ENCODE measurements at regions of chr11 and their contacts with region 1.

Region 1: DNA sequence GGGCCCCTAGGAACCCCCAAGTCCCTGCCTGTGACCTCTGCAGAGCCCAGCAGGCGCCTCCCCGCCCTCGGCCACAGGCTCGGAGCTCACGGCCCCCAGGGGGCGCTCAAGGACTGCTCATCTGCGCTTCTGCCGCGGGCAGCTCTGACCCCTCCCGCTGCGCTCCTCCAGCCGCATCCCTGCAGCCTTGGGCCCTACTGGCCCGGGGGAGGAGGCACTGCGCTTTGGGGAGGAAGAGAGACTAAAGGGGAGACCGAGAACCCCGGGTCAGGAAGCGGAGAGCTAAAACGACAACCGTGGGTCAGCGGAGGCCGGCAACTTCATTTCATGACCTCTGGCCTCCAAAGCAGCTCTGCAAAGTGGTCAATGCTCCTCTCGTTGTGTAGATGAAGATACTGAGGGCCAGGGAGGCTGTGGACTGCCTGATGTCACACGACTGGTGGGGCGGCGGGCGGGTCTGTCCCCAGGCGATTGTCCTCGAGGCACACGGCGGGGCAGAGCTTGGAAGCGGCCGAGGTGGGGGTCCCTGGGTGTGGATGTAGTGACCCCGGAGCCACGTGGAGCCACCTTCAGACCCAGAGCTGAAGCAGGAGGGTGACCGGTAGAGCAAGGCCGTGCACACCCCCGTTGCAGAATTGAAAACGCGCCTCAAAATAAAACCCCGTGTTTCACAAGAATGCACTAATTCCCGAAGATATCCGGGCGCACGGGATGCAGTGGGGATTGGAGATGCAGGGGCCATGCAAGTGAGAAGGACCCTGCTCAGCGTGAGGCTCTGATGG is 2.7 kb upstream of the KRTAP5-6 start:
- DNase-seq: peak; percentile 50 to 67
- ATAC-seq: peak; percentile 87 to 92
- H3K4me3 ChIP-seq: peak overlapping the region in 3 of 4 donors; percentile 26 to 45 (median 27)
- H3K27ac ChIP-seq: peak overlapping the region in 1 of 4 donors; percentile 43
- H3K4me1 ChIP-seq: peaks cover 5 to 7% of the 10 kb centered on the region in 2 donors
- H3K27me3 ChIP-seq: no peaks in the 10 kb centered on the region
- CTCF ChIP-seq: peak; percentile 84 to 97 (median 95)
- POLR2A ChIP-seq: no peak

Region 2: DNA sequence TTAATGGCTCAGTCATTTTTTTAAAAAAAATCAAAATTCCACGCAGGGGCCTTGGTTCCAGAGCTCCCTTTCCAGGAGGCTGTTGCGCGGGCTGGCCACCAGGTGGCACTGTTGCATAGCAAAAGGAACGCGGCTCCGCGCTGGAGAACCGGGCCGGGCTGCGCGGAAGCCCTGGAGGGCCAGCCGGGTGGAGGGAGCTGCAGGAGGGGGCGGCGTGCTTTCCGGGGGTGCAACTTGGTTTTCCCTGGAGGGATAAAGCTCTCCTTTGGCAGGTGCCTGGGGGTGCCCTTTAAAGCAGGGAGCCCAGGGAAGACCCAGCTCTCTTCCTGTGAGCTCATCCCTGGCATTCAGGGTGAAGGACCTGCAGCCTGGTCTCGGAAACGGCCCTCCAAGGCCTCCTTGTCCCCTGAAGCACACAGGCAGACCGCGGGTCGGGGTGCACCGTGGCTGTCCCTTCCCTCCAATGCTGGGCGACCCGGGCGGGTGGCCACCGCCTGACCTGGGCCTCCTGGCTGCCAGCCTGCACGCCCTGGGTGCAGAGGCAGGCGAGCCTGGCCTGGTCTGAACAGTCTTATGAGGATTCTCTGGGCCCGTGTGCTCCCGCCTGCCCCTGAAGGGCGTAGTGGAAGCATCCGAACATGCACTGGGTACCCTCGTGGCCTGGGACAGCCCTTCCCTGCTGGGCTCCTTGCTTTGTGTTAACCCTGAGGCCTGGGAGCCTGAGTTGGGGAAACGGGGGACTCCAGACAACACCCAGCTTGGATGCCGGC is 41.3 kb before region 1 on chr11:
- in situ Hi-C with region 1: no loop called
- intact Hi-C with region 1: loop called (anchors 5 kb)
- DNase-seq: peak; percentile 29 to 52
- ATAC-seq: peak; percentile 66 to 80
- H3K4me3 ChIP-seq: no peak overlapping the region
- H3K27ac ChIP-seq: no peak overlapping the region
- H3K4me1 ChIP-seq: no peaks in the 10 kb centered on the region
- H3K27me3 ChIP-seq: no peaks in the 10 kb centered on the region
- CTCF ChIP-seq: peak; percentile 84 to 99 (median 96)
- POLR2A ChIP-seq: no peak

Region 3: GRCh38 chr11:1820463-1821325 is 126.4 kb after region 1 on chr11:
- in situ Hi-C with region 1: loop called (anchors 5 to 10 kb)
- intact Hi-C with region 1: no loop called
- DNase-seq: no peak
- ATAC-seq: no peak
- H3K4me3 ChIP-seq: no peak overlapping the region
- H3K27ac ChIP-seq: no peak overlapping the region
- H3K4me1 ChIP-seq: no peaks in the 10 kb centered on the region
- H3K27me3 ChIP-seq: no peaks in the 10 kb centered on the region
- CTCF ChIP-seq: no peak
- POLR2A ChIP-seq: no peak

Region 4: DNA sequence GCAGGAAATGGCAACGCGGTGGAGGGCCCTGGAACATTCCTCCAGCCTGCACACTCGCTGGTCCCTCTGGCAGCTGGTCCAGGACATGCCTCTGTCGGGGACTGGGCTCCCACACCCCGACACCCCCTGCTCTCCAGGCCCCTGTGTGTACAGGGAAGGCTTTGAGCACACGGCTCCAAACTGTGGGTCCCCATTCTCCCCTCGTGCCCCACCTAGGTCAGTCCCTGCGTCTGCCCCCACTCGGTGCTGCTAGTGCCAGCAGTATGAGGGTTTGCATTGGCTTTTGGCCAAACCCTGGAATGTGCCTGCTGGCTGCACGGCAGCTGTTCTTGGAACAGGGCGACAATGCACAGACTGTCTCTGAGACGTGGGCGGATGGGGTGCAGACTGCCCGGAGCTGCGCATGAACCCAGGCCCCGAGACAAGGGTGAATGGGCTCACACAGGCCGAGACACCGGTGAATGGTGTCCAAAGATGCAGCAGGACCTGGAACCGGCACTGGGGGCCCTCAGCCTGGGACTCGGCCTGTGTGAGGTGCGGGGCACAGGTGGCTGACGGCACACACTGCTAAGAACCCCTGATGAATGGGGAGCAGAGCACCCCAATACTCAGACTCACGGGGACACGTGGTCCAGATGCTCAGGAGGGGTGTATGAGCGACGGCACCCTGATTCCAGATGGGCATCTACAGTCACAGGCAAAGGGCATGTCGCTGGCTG is 133.0 kb after region 1 on chr11:
- in situ Hi-C with region 1: loop called (anchors 5 to 10 kb)
- intact Hi-C with region 1: loop called (anchors 1 kb)
- DNase-seq: peak in 1 of 2 donors; percentile 15
- ATAC-seq: peak in 1 of 2 donors; percentile 23
- H3K4me3 ChIP-seq: no peak overlapping the region
- H3K27ac ChIP-seq: no peak overlapping the region
- H3K4me1 ChIP-seq: no peaks in the 10 kb centered on the region
- H3K27me3 ChIP-seq: no peaks in the 10 kb centered on the region
- CTCF ChIP-seq: no peak
- POLR2A ChIP-seq: no peak

Region 5: DNA sequence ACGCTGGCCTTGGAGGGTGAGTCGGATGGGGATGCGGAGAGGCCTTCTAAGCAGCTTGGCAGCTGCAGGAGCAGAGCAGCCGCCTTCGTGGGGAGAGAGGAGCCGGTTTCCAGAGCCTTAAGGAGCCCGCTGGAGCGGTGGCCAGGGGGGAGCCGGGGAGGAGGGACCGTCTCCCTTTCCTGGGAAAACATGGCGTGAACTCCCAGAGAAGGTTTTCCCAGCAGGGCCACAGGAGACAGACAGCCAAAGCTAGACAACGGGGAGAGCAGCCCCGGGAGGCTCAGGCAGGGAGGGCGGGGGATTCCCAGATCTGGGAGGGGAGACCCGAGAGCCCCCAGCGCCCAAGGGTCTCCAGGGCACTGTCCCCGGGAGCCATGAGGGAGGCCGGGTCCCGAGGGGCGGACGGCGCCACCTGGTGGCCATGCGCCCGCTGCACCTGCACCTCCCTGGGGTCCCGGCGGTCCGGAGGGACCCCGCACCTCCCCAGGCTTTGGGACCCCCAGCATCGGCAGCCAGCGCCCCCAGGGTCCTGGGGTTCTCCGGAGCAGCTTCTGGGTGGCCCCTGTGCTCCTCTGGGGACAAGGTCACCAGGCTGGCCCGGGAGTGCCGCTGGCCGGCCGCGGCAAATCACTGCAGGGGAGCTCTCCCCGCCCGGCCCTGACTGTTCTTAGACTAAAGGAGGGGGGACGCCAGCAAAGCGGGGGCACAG is 138.1 kb after region 1 on chr11:
- in situ Hi-C with region 1: loop called in 2 of 4 experiments (anchors 5 to 10 kb)
- intact Hi-C with region 1: loop called (anchors 1 kb)
- DNase-seq: no peak
- ATAC-seq: peak; percentile 62 to 77
- H3K4me3 ChIP-seq: peak overlapping the region in 3 of 4 donors; percentile 7 to 17 (median 9)
- H3K27ac ChIP-seq: no peak overlapping the region
- H3K4me1 ChIP-seq: peaks cover 0 to 1% of the 10 kb centered on the region in 2 donors
- H3K27me3 ChIP-seq: no peaks in the 10 kb centered on the region
- CTCF ChIP-seq: peak; percentile 95 to 99 (median 99)
- POLR2A ChIP-seq: no peak

Measured in gastrocnemius medialis (tissue), 4 donors.